CD4-positive, alpha-beta memory T cell (primary cell): ENCODE measurements at regions of chr7 and their contacts with region 1.

Region 1: GRCh38 chr7:141014524-141015395 is at the start of gene MRPS33:
- DNase-seq: peak; percentile 95 to 97 (median 96)
- H3K4me3 ChIP-seq: peak within 1 kb of the TSS; percentile 61 to 85
- H3K4me3 Mint-ChIP-seq: peak within 1 kb of the TSS; percentile 95 to 100 (median 98)
- H3K27ac ChIP-seq: peak within 1 kb of the TSS; percentile 96
- H3K27ac Mint-ChIP-seq: peak within 1 kb of the TSS; percentile 99 to 100 (median 100)
- H3K4me1 ChIP-seq: peaks cover 24% of the 10 kb centered on the region
- H3K4me1 Mint-ChIP-seq: peaks cover 19 to 42% (median 34%) of the 10 kb centered on the region in 4 donors
- H3K27me3 ChIP-seq: no peaks in the 10 kb centered on the region
- H3K27me3 Mint-ChIP-seq: peaks cover 5 to 7% of the 10 kb centered on the region in 2 donors
- total RNA-seq, gene MRPS33: 46.7 to 48.0 TPM

Region 2: DNA sequence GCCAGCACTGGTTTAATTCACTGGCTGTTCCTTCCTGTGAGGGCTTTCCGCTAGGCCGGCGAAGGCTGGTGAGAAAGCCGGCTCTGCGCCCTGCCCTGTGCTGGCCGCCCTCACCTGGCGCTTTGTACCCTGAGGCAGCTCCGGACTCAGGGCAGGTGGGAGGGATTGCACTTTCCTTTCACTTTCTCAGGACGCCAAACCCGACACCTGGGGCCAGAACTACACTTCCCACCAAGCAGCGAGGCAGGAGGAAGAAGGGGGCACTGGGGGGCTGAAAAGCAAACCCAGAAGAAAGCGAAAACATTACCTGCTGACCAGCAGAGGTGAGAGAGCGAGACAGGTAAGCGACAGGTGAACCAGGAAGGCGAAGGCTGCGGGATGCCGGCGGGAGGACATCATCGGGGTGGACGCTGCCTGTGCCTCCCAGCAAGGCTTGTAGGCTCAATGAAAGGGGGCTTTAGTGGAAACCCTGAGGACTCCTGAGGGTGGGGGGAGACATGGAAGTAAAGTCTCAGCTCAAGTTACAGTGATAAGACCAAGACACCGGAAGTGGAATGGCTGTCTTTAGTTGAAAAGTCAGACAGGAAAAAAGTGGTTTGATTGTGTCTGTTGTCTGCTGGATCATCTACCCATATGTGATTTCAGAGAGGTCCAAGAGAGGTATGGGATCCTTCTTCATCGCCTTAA is 610.7 kb before region 1 on chr7 and contains the start of gene RAB19:
- CTCF ChIA-PET with region 1: no interaction called
- POLR2A ChIA-PET with region 1: no interaction called
- intact Hi-C with region 1: loop called (anchors 10 kb)
- DNase-seq: peak; percentile 42 to 52 (median 50)
- H3K4me3 ChIP-seq: peak within 1 kb of the TSS; percentile 74 to 92
- H3K4me3 Mint-ChIP-seq: peak within 1 kb of the TSS; percentile 94 to 99 (median 98)
- H3K27ac ChIP-seq: peak within 1 kb of the TSS; percentile 63
- H3K27ac Mint-ChIP-seq: peak within 1 kb of the TSS; percentile 89 to 99 (median 96)
- H3K4me1 ChIP-seq: peaks cover 8% of the 10 kb centered on the region
- H3K4me1 Mint-ChIP-seq: peaks cover 13 to 22% (median 18%) of the 10 kb centered on the region in 4 donors
- H3K27me3 ChIP-seq: no peaks in the 10 kb centered on the region
- H3K27me3 Mint-ChIP-seq: no peaks in the 10 kb centered on the region
- total RNA-seq, gene RAB19: 2.5 to 3.2 TPM

Region 3: DNA sequence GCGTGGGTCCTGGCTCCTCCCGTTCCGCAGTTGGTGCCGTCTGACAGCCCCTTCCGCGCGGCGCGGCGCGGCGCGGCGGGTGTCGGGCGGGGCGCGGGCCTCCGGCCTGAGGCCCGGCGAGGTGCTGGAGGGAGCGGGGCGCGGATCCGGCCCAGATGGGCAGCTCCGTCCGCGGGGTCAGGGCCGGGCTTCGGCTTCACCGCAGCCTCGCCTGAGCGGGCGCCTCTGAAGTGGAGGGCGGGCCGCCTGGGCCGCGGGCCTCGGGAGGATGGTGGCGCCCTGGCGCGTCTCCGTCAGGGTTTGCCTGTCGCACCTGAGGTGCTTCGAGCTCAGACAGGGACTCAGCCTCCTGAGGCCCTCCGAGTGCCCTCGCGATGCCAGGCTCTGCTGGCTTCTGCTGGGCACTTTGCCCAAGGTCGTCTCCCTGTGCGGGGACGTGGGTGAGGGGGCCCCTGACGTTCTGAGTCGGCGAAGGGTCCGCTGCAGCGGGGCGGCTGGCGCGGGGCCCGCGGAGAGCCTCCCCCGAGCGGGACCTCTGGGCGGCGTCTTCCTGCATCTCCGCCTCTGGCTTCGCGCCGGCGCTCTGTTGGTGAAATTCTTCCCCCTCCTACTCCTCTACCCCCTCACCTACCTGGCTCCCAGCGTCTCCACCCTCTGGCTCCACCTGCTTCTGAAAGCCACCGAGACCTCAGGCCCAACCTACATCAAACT is 341.5 kb before region 1 on chr7:
- CTCF ChIA-PET with region 1: interaction called, 4 read pairs
- POLR2A ChIA-PET with region 1: no interaction called
- intact Hi-C with region 1: loop called (anchors 2 kb)
- DNase-seq: peak; percentile 68 to 78 (median 74)
- H3K4me3 ChIP-seq: peak overlapping the region; percentile 61 to 65
- H3K4me3 Mint-ChIP-seq: peak overlapping the region; percentile 81 to 95 (median 88)
- H3K27ac ChIP-seq: peak overlapping the region; percentile 74
- H3K27ac Mint-ChIP-seq: peak overlapping the region; percentile 82 to 94 (median 92)
- H3K4me1 ChIP-seq: peaks cover 28% of the 10 kb centered on the region
- H3K4me1 Mint-ChIP-seq: peaks cover 17 to 42% (median 22%) of the 10 kb centered on the region in 4 donors
- H3K27me3 ChIP-seq: no peaks in the 10 kb centered on the region
- H3K27me3 Mint-ChIP-seq: no peaks in the 10 kb centered on the region

Region 4: DNA sequence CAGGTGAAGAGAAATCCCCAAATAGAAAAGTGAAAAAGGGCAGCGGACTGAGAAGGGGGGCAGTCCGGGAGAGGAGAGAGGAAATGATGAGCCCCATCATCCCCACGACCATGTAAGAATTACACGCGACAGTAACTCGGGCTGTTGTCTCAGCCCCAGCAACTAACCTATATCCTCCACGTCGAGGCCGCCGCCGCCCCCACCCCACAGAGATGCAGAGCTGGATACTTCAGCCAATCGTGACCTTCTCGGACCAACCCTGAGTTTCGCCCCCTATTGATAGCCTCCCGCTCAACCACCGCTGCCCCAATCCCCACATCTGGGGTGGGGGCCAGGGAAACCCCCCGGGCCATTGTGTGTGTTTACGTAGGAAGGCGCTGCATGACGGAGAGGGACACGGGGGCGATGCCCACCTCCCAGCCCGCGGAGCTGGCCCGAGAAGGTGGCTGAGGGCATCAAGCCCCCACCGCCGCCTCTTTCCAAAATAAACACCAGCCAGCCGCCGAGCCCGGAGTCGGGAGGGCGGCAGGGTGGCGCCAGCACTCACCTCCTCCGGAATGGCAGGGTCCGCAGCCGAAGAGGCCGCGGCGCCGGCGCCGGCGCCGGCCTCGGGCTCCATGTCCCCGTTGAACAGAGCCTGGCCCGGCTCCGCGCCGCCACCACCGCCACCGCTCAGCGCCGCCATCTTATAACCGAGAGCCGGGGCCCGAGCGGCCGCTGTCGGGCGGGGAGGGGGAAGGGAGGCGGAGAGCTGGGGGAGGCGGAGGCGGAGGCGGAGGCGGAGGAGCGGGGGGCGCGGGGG is 90.5 kb before region 1 on chr7:
- CTCF ChIA-PET with region 1: interaction called, 4 read pairs
- POLR2A ChIA-PET with region 1: interaction called, 42 read pairs
- intact Hi-C with region 1: loop called (anchors 1 kb)
- DNase-seq: peak; percentile 79 to 92 (median 83)
- H3K4me3 ChIP-seq: peak overlapping the region; percentile 68 to 90
- H3K4me3 Mint-ChIP-seq: no peak overlapping the region
- H3K27ac ChIP-seq: peak overlapping the region; percentile 95
- H3K27ac Mint-ChIP-seq: no peak overlapping the region
- H3K4me1 ChIP-seq: peaks cover 28% of the 10 kb centered on the region
- H3K4me1 Mint-ChIP-seq: peaks cover 11 to 29% (median 18%) of the 10 kb centered on the region in 4 donors
- H3K27me3 ChIP-seq: no peaks in the 10 kb centered on the region
- H3K27me3 Mint-ChIP-seq: peaks cover 0 to 4% of the 10 kb centered on the region in 2 donors

Region 5: GRCh38 chr7:141511676-141512396 is 497.1 kb after region 1 on chr7:
- CTCF ChIA-PET with region 1: no interaction called
- POLR2A ChIA-PET with region 1: no interaction called
- intact Hi-C with region 1: no loop called
- DNase-seq: no peak
- H3K4me3 ChIP-seq: no peak overlapping the region
- H3K4me3 Mint-ChIP-seq: peak overlapping the region; percentile 68 to 81 (median 80)
- H3K27ac ChIP-seq: no peak overlapping the region
- H3K27ac Mint-ChIP-seq: peak overlapping the region in 1 of 7 donors; percentile 35
- H3K4me1 ChIP-seq: peaks cover 4% of the 10 kb centered on the region
- H3K4me1 Mint-ChIP-seq: peaks cover 7 to 16% (median 11%) of the 10 kb centered on the region in 4 donors
- H3K27me3 ChIP-seq: peaks cover 7% of the 10 kb centered on the region
- H3K27me3 Mint-ChIP-seq: peaks cover 41 to 44% of the 10 kb centered on the region in 2 donors

Region 6: DNA sequence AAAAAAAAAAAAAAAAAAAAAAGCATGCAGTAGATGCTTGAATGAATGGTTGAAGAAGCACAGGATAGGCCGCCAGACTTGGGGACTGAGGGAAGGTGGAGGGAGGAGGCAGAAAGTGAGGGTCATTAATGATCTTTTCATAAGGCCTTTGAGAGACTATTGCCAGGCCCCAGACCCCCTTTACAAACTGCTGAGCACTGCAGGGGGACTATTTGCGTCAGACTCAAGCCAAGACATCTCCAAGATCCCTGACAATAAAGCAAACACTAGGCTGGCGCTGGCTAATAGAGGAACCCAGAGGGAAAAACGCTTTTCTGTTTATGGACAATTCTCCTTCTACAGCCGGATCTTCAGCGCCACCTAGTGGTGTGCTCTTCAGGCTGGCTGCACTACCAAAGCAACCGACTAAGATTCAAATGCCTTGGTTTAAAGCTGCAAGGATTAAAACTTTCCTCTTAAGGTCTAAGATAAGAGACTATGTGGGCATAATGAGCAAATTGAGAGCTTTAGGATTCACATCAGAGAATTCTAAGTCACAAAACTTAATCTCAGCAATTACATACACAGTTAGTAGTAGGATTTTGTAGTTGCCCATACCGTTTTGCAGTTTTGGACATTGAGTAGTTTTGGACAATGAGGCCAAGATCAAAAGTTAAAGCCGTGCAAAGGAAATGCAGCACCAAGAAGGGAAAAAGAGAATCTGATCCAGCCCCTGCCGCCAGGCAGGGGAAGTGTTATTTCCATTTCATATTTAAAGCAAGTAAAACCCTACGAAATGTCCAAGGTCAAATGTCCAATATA is 518.6 kb after region 1 on chr7:
- CTCF ChIA-PET with region 1: interaction called, 3 read pairs
- POLR2A ChIA-PET with region 1: no interaction called
- intact Hi-C with region 1: loop called (anchors 1 kb)
- DNase-seq: peak in 4 of 5 donors; percentile 50 to 58 (median 51)
- H3K4me3 ChIP-seq: no peak overlapping the region
- H3K4me3 Mint-ChIP-seq: no peak overlapping the region
- H3K27ac ChIP-seq: no peak overlapping the region
- H3K27ac Mint-ChIP-seq: peak overlapping the region in 4 of 7 donors; percentile 4 to 65 (median 25)
- H3K4me1 ChIP-seq: no peaks in the 10 kb centered on the region
- H3K4me1 Mint-ChIP-seq: peaks cover 0 to 4% (median 1%) of the 10 kb centered on the region in 4 donors
- H3K27me3 ChIP-seq: peaks cover 5% of the 10 kb centered on the region
- H3K27me3 Mint-ChIP-seq: peaks cover 14 to 24% of the 10 kb centered on the region in 2 donors

Region 7: DNA sequence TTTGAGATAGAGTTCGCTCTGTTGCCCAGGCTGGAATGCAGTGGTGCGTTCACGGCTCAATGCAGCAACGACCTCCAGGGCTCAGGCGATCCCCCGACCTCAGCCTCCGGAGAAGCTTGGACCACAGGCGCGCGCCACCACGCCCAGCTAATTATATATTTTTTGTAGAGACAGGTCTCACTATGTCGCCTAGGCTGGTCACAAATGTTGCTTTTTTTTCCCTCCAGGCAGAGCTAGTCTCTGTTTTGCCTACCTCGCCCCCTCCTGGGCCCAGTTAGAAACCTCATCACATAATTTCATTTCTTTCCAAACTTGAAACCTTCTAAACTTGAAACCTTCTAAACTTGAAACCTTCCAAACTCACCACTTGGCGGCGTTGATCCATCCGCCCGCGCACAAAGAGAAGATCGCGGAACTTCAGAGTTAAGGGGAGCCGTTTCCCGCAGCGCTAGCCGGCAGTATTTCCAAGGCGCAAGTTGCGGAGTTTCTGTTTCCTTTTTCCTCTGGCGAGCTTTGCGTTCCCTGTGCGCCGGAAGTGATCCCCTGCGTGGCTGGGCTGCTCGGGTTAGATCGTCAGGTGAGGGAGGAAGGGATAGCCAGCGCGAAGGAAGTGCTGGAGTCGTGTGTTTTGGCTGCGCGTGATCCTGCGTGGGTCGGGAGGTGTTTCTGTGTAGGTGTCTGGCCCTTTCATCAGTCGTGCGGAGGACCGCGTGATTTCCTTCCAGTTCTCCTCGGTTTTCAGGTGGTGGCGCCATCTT is 723.3 kb after region 1 on chr7 and contains the start of gene SSBP1:
- CTCF ChIA-PET with region 1: interaction called, 5 read pairs
- POLR2A ChIA-PET with region 1: interaction called, 23 read pairs
- intact Hi-C with region 1: no loop called
- DNase-seq: peak; percentile 93 to 95 (median 93)
- H3K4me3 ChIP-seq: peak within 1 kb of the TSS; percentile 94 to 95
- H3K4me3 Mint-ChIP-seq: peak within 1 kb of the TSS; percentile 98 to 100 (median 99)
- H3K27ac ChIP-seq: peak within 1 kb of the TSS; percentile 85
- H3K27ac Mint-ChIP-seq: peak within 1 kb of the TSS; percentile 96 to 99 (median 99)
- H3K4me1 ChIP-seq: peaks cover 36% of the 10 kb centered on the region
- H3K4me1 Mint-ChIP-seq: peaks cover 26 to 60% (median 38%) of the 10 kb centered on the region in 4 donors
- H3K27me3 ChIP-seq: no peaks in the 10 kb centered on the region
- H3K27me3 Mint-ChIP-seq: no peaks in the 10 kb centered on the region
- total RNA-seq, gene SSBP1: 88.2 to 91.2 TPM